ENCODE measurements at regions of chr14 and their contacts with region 1.

Region 1: GRCh38 chr14:73613046-73613383 is 698 bp downstream of the ACOT6 start:
- DNase-seq: no peak
- ATAC-seq: no peak
- H3K4me3 ChIP-seq: peak overlapping the region; percentile 56
- H3K4me3 Mint-ChIP-seq: peak overlapping the region; percentile 91
- H3K27ac ChIP-seq: peak overlapping the region in 1 of 2 donors; percentile 16
- H3K27ac Mint-ChIP-seq: peak overlapping the region; percentile 82
- H3K4me1 ChIP-seq: peaks cover 10% of the 10 kb centered on the region
- H3K4me1 Mint-ChIP-seq: peaks cover 7% of the 10 kb centered on the region
- H3K27me3 ChIP-seq: no peaks in the 10 kb centered on the region
- H3K27me3 Mint-ChIP-seq: no peaks in the 10 kb centered on the region
- CTCF ChIP-seq: no peak

Region 2: DNA sequence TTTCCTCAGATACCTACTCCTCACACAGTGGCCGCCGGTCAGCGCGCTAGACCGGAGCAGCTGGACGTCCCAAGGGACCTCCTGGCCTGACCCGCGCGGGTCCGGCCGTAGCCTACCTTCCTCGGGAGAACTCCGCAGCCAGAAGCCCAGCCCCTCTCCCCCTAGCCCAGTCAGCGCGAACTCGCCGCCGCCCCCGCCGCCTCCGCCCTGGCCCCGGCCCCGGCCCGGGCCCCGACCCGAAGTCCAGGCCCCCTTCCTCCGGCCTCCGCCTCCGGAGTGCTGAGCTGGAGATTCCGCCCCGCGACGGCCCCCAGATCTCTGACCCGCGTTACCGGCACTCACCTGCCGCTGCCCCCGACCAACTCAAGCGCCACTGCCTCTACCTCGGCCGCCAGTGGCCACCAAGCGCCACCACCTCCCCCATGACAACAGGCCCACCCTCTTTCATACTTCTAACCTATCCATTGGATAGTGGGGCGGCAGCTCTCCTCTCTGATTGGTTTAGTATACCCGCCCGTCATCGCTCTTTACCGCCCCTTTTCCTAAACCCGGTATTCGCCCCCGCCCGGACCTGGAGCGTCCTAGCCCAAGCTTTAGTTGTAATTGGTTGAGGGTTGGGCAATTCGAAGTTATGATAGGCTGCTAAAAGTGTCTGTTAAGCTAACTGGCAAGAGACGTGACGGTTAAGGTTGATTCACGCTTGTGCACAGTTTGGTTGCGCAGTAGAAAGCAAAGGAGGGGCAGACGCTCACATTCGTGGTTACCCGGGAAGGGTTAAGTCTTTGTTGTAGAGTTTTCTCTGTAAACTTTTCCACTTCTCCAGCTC is 154.7 kb before region 1 on chr14 and contains the start of gene NUMB:
- CTCF ChIA-PET with region 1: no interaction called
- POLR2A ChIA-PET with region 1: interaction called, 10 read pairs
- intact Hi-C with region 1: no loop called
- DNase-seq: peak; percentile 88 to 100 (median 94)
- ATAC-seq: peak; percentile 96
- H3K4me3 ChIP-seq: peak within 1 kb of the TSS; percentile 98
- H3K4me3 Mint-ChIP-seq: peak within 1 kb of the TSS; percentile 97
- H3K27ac ChIP-seq: peak within 1 kb of the TSS; percentile 23 to 37
- H3K27ac Mint-ChIP-seq: peak within 1 kb of the TSS; percentile 84
- H3K4me1 ChIP-seq: peaks cover 21% of the 10 kb centered on the region
- H3K4me1 Mint-ChIP-seq: peaks cover 45% of the 10 kb centered on the region
- H3K27me3 ChIP-seq: no peaks in the 10 kb centered on the region
- H3K27me3 Mint-ChIP-seq: no peaks in the 10 kb centered on the region
- CTCF ChIP-seq: no peak
- total RNA-seq, gene NUMB: 27.9 to 31.5 TPM

Region 3: DNA sequence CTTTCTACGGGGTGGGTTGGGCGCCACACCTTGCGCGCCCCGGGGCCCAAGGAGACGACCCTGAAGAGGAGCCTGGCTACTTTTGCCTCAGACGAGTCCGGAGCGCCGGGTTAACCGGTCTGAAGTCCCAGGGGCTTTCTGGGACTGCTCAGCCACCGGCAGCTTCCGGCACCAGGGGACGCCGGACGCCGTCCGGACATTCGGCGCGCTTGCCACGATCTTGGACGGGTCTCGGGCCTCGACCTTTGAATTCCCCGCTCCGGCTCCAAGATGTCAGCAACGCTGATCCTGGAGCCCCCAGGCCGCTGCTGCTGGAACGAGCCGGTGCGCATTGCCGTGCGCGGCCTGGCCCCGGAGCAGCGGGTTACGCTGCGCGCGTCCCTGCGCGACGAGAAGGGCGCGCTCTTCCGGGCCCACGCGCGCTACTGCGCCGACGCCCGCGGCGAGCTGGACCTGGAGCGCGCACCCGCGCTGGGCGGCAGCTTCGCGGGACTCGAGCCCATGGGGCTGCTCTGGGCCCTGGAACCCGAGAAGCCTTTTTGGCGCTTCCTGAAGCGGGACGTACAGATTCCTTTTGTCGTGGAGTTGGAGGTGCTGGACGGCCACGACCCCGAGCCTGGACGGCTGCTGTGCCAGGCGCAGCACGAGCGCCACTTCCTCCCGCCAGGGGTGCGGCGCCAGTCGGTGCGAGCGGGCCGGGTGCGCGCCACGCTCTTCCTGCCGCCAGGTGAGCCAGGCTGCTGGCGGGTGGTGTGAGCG is 21.1 kb before region 1 on chr14 and contains the start of gene ACOT4:
- CTCF ChIA-PET with region 1: no interaction called
- POLR2A ChIA-PET with region 1: interaction called, 90 read pairs
- intact Hi-C with region 1: loop called (anchors 1 to 2 kb)
- DNase-seq: peak in 13 of 14 experiments; percentile 35 to 88 (median 57)
- ATAC-seq: peak; percentile 89
- H3K4me3 ChIP-seq: peak within 1 kb of the TSS; percentile 88
- H3K4me3 Mint-ChIP-seq: peak within 1 kb of the TSS; percentile 82
- H3K27ac ChIP-seq: peak within 1 kb of the TSS in 1 of 2 donors; percentile 58
- H3K27ac Mint-ChIP-seq: peak within 1 kb of the TSS; percentile 71
- H3K4me1 ChIP-seq: peaks cover 11% of the 10 kb centered on the region
- H3K4me1 Mint-ChIP-seq: peaks cover 6% of the 10 kb centered on the region
- H3K27me3 ChIP-seq: no peaks in the 10 kb centered on the region
- H3K27me3 Mint-ChIP-seq: no peaks in the 10 kb centered on the region
- CTCF ChIP-seq: peak; percentile 20
- total RNA-seq, gene ACOT4: 1.0 to 1.2 TPM

Region 4: DNA sequence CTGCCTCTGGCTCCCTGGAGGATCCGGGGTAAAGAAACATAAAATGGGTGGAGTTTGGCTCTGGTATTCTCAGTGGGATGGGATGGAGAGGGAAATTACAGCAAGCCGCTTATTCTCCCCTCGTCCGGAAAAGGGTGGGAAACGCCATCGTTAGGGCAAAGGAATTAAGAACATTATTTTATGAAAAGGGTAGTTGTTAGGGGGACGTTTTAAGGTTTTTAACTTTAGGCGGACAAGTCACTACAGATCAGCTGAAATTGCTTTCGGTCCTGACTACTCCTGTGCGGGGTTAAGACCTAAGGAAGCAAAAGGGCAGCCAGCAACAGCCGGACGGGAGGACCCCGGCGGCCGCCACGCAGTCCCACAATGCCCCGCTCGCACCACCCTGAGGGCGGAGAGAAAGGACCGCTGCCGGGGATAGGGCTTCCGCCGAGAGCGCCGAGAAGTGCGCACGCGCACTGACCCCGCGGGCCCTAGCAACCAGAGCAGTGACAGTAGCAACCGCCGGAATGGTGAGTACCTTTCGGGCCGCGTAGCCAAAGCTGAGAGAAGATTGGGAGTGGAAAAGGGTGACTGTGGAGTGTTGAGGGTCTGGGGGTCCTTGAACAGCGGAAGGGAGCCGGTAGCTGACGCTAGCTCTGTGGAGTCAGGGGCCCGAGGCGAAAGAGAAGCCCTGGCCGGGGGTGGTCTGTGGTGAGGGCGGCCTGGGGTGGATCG is 31.7 kb after region 1 on chr14 and contains the start of gene DNAL1:
- CTCF ChIA-PET with region 1: no interaction called
- POLR2A ChIA-PET with region 1: interaction called, 11 read pairs
- intact Hi-C with region 1: no loop called
- DNase-seq: peak; percentile 82 to 96 (median 88)
- ATAC-seq: peak; percentile 99
- H3K4me3 ChIP-seq: peak within 1 kb of the TSS; percentile 88
- H3K4me3 Mint-ChIP-seq: peak within 1 kb of the TSS; percentile 91
- H3K27ac ChIP-seq: peak within 1 kb of the TSS; percentile 39 to 63
- H3K27ac Mint-ChIP-seq: peak within 1 kb of the TSS; percentile 76
- H3K4me1 ChIP-seq: peaks cover 13% of the 10 kb centered on the region
- H3K4me1 Mint-ChIP-seq: peaks cover 20% of the 10 kb centered on the region
- H3K27me3 ChIP-seq: no peaks in the 10 kb centered on the region
- H3K27me3 Mint-ChIP-seq: no peaks in the 10 kb centered on the region
- CTCF ChIP-seq: no peak
- total RNA-seq, gene DNAL1: 2.9 to 3.7 TPM